ENCODE measurements at regions of chr1 and their contacts with region 1.

Region 1: DNA sequence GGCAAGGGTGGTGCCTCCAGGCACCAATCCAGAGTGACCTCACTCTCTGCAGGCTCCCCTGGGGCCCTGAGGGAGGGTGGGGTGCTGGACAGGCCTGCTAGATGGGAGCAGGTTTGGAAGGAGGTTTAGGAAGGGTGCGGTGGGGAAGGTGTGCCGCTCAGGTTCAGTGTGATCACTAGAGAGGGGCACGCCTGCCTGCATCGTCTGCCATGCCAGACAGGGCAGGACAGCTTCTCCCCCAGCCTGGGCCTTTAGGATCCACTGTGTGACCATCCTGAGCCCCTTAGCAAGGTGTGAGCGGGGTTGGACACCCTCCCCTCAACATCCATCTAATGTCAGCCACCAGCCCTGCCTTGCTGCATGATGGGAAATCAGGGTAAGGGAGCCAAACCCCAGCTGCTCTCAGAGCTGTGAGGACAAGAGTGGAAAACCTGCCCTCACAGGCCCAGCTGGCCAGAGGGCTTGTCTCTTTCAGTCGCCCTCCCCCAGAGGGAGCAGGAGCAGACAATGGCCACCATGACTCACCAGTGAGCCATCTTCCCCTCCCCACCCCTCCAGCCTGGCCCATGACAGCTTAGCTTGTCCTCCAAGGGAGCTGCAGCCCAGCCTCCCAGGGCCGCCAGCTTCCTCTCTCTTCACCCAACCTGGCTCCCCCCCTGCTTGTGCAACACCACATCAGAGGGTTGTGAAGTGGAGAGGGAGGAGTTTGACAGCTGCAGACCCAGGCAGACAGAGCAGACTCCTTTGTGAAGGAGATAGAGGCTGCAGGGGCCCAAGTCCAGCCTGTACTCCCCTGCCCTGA is 37.0 kb downstream of the NUAK2 start:
- DNase-seq: no peak
- ATAC-seq: peak; percentile 61
- H3K4me3 ChIP-seq: 0 out of 2 replicates have a peak overlapping the region, but pooled peaks have one; percentile 32
- H3K27ac ChIP-seq: no peak overlapping the region
- H3K4me1 ChIP-seq: peaks cover 64% of the 10 kb centered on the region
- H3K27me3 ChIP-seq: no peaks in the 10 kb centered on the region; a peak in 1 of 4 replicates
- CTCF ChIP-seq: 0 out of 6 replicates have a peak, but pooled peaks of 1 of the 3 experiments have one; percentile 0
- EP300 ChIP-seq: peak; percentile 33 to 42; a peak in 1 of 4 replicates
- POLR2A ChIP-seq: 0 out of 2 replicates have a peak, but pooled peaks have one; percentile 29
- RAD21 ChIP-seq: no peak

Region 2: DNA sequence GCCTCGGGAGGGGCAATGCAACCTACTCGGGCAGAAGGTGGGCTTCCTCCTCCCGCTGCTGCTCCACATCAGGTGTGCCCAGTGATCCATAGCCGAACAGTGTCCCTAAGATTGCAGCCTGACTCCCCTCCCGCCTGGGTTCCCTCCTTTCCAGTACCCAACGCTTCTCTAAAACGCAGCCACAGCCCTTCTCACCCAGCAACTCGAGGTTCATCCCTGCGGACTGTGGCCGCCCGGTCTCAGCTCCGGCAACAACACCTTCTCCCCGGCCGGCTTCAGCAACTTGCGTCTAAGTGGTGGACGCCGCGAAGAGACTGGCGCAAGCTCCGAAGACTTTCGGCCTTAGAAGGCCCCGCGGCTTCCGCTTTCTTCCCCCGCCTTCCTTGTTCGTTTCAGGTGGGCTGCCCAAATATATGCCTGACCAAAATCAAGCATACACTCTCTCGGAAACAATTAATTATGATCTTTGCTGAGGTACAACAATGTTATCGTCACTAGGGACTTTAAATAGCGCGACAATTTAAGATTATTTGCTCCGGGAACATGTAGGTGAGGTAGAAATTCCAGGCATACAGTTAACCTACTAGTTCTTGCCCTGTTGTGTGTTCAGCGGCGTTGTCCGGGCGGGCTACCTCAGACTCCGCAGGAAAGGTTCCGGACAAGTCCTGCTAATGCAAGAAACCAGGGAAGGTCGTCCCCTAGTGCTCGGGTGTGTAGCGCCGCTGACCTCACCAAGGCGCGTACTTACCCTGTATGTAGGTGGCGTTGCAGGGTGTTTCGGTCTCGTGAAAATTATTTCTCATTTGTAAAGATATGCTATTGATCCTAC is 162.7 kb before region 1 on chr1 and contains the start of gene RBBP5:
- CTCF ChIA-PET with region 1: no interaction called
- POLR2A ChIA-PET with region 1: no interaction called
- RAD21 ChIA-PET with region 1: interaction called, 3 read pairs
- SMC1A ChIA-PET with region 1: interaction called, 4 read pairs
- in situ Hi-C with region 1: no loop called
- intact Hi-C with region 1: loop called (anchors 1 kb)
- DNase-seq: peak; percentile 94
- ATAC-seq: peak; percentile 97
- H3K4me3 ChIP-seq: peak within 1 kb of the TSS; percentile 96
- H3K27ac ChIP-seq: peak within 1 kb of the TSS; percentile 99
- H3K4me1 ChIP-seq: no peaks in the 10 kb centered on the region; the same call in 1 of the 2 replicates
- H3K27me3 ChIP-seq: no peaks in the 10 kb centered on the region
- CTCF ChIP-seq: peak; percentile 76 to 84 (median 82)
- EP300 ChIP-seq: peak in 1 of 2 experiments; percentile 22; a peak in 2 of 4 replicates
- POLR2A ChIP-seq: peak; percentile 99
- RAD21 ChIP-seq: peak; percentile 55
- polyA plus RNA-seq, gene RBBP5: 10.0 to 11.5 TPM

Region 3: DNA sequence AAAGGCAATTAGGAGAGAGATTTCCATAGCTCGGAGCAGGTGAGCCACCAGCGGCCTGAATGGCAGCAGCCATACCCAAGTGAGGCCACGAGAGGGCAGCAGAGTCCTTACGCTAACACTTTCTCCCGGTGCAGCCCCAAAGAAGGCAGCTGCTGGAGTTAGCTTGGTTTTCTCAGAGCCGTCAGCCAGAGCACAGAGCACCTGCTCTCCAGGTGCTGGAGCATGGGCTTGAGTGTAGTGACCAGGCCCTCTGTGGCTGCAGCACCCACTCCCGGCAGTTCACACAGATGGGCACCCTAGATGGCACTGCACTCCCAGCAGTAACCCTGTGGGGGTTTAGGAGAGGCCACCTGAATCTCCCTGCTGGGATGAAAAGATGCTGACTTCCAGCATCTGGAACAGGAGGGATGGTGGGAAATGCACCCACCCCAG is 11.0 kb before region 1 on chr1:
- CTCF ChIA-PET with region 1: interaction called, 2,333 read pairs
- POLR2A ChIA-PET with region 1: interaction called, 56 read pairs
- RAD21 ChIA-PET with region 1: interaction called, 212 read pairs
- SMC1A ChIA-PET with region 1: interaction called, 121 read pairs
- in situ Hi-C with region 1: no loop called
- intact Hi-C with region 1: no loop called
- DNase-seq: peak; percentile 32
- ATAC-seq: peak; percentile 90
- H3K4me3 ChIP-seq: no peak overlapping the region
- H3K27ac ChIP-seq: no peak overlapping the region
- H3K4me1 ChIP-seq: peaks cover 3% of the 10 kb centered on the region; the same call in 1 of the 2 replicates
- H3K27me3 ChIP-seq: peaks cover 0 to 2% of the 10 kb centered on the region in 2 experiments; a peak in 1 of 4 replicates
- CTCF ChIP-seq: peak; percentile 92 to 98 (median 98)
- EP300 ChIP-seq: peak in 1 of 2 experiments; percentile 38; a peak in 1 of 4 replicates
- POLR2A ChIP-seq: no peak
- RAD21 ChIP-seq: peak; percentile 96

Region 4: GRCh38 chr1:205313563-205314308 is 29.2 kb after region 1 on chr1:
- CTCF ChIA-PET with region 1: interaction called, 2,333 read pairs
- POLR2A ChIA-PET with region 1: interaction called, 151 read pairs
- RAD21 ChIA-PET with region 1: interaction called, 892 read pairs
- SMC1A ChIA-PET with region 1: interaction called, 1,445 read pairs
- in situ Hi-C with region 1: no loop called
- intact Hi-C with region 1: loop called (anchors 1 kb)
- DNase-seq: peak; percentile 48
- ATAC-seq: peak; percentile 86
- H3K4me3 ChIP-seq: peak overlapping the region; percentile 35; the same call in 1 of the 2 replicates
- H3K27ac ChIP-seq: no peak overlapping the region; the same call in 1 of the 2 replicates
- H3K4me1 ChIP-seq: peaks cover 30% of the 10 kb centered on the region
- H3K27me3 ChIP-seq: no peaks in the 10 kb centered on the region; a peak in 1 of 4 replicates
- CTCF ChIP-seq: no peak
- EP300 ChIP-seq: peak; percentile 68; a peak in 2 of 4 replicates
- POLR2A ChIP-seq: no peak; the same call in 1 of the 2 replicates
- RAD21 ChIP-seq: no peak

Region 5: DNA sequence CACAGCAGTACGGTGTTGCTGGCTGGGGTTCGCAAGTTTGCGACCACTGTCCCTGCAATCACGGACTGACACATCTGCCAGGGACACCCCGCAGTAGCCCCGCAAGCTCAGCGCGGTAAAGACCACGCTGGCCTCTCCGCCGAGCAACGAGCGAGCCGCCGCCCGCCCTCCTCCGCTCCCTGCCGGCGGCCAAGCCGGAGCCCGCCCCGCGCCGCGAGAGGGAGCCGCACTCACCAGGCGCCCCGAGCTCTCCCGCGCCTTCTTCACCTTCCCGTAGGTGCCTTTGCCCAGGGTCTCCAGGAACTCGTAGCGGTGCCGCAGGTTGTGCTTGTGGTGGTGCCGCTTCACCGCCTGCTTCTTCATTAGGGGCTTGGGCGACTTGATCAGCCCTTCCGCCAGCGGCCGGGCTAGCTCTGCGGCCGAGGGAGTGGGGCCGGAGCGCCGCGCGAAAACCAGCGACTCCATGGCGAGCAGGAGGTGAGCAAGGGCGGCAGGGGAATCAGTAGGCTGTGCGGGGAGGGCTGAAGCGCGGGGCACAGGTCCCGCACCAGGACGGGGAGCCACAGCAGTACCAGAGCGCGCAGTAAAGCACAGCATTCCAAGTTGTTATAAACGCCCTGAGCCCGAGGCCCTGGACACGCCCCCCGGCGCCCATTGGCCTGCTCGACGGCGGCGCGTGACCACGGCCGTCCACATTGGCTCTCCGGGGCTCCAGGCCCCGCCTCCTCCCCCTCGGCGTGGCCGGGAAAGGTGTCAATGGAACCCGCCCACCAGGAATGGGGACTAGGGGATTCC is 36.8 kb after region 1 on chr1 and contains the start of gene NUAK2:
- CTCF ChIA-PET with region 1: interaction called, 2,333 read pairs
- POLR2A ChIA-PET with region 1: interaction called, 151 read pairs
- RAD21 ChIA-PET with region 1: interaction called, 892 read pairs
- SMC1A ChIA-PET with region 1: interaction called, 1,445 read pairs
- in situ Hi-C with region 1: loop called (anchors 5 kb)
- intact Hi-C with region 1: loop called (anchors 1 kb)
- DNase-seq: no peak
- ATAC-seq: peak; percentile 85
- H3K4me3 ChIP-seq: peak within 1 kb of the TSS; percentile 36; the same call in 1 of the 2 replicates
- H3K27ac ChIP-seq: no peak within 1 kb of the TSS
- H3K4me1 ChIP-seq: peaks cover 13% of the 10 kb centered on the region
- H3K27me3 ChIP-seq: peaks cover 0 to 8% of the 10 kb centered on the region in 2 experiments; a peak in 3 of 4 replicates
- CTCF ChIP-seq: peak in 1 of 3 experiments; percentile 21; a peak in 1 of 6 replicates
- EP300 ChIP-seq: no peak
- POLR2A ChIP-seq: peak; percentile 44; the same call in 1 of the 2 replicates
- RAD21 ChIP-seq: peak; percentile 9; the same call in 1 of the 2 replicates
- polyA plus RNA-seq, gene NUAK2: 0.27 to 0.31 TPM

Region 6: DNA sequence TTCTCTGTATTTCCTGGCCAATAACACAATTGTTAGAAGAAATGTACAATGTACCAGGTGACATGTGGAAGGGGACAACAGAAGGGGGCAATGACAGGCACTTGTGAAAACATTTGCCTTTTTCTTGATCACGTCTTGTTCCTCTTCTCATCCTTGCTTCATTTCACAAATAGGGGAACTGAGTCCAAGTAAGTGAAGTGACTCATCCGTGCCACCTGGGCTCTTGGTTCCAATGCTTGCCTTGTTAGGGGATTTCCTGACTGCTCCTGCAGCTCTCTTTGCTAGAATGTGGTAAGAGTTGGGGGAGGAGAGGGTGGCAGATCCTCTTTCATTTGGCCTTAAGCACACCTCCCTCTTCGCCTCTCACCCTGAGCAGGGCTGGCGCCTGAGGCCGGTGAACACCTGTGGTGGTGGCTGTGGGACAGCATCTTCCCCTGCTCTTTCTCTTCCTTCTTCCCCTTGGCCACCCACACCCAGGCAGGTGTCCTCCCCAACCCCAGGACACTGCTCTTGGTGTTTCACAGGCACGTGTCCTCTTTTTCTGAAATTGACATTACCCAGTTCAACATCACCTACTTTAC is 766.2 kb after region 1 on chr1:
- CTCF ChIA-PET with region 1: no interaction called
- POLR2A ChIA-PET with region 1: no interaction called
- RAD21 ChIA-PET with region 1: no interaction called
- SMC1A ChIA-PET with region 1: no interaction called
- in situ Hi-C with region 1: loop called (anchors 5 kb)
- intact Hi-C with region 1: loop called (anchors 5 kb)
- DNase-seq: peak; percentile 100
- ATAC-seq: peak; percentile 88
- H3K4me3 ChIP-seq: no peak overlapping the region
- H3K27ac ChIP-seq: peak overlapping the region; percentile 91
- H3K4me1 ChIP-seq: peaks cover 53% of the 10 kb centered on the region
- H3K27me3 ChIP-seq: no peaks in the 10 kb centered on the region
- CTCF ChIP-seq: 0 out of 6 replicates have a peak, but pooled peaks of 1 of the 3 experiments have one; percentile 3
- EP300 ChIP-seq: peak; percentile 97 to 98
- POLR2A ChIP-seq: peak; percentile 69
- RAD21 ChIP-seq: 0 out of 2 replicates have a peak, but pooled peaks have one; percentile 15

Region 7: GRCh38 chr1:206059355-206059915 is 774.9 kb after region 1 on chr1:
- CTCF ChIA-PET with region 1: no interaction called
- POLR2A ChIA-PET with region 1: no interaction called
- RAD21 ChIA-PET with region 1: no interaction called
- SMC1A ChIA-PET with region 1: no interaction called
- in situ Hi-C with region 1: loop called (anchors 5 kb)
- intact Hi-C with region 1: loop called (anchors 5 kb)
- DNase-seq: no peak
- ATAC-seq: peak; percentile 36
- H3K4me3 ChIP-seq: no peak overlapping the region
- H3K27ac ChIP-seq: no peak overlapping the region; the same call in 1 of the 2 replicates
- H3K4me1 ChIP-seq: peaks cover 10% of the 10 kb centered on the region
- H3K27me3 ChIP-seq: no peaks in the 10 kb centered on the region
- CTCF ChIP-seq: no peak
- EP300 ChIP-seq: no peak
- POLR2A ChIP-seq: no peak; the same call in 1 of the 2 replicates
- RAD21 ChIP-seq: no peak